Lower leg skin (tissue), 4 donors: ENCODE measurements at regions of chr16 and their contacts with region 1.

Region 1: DNA sequence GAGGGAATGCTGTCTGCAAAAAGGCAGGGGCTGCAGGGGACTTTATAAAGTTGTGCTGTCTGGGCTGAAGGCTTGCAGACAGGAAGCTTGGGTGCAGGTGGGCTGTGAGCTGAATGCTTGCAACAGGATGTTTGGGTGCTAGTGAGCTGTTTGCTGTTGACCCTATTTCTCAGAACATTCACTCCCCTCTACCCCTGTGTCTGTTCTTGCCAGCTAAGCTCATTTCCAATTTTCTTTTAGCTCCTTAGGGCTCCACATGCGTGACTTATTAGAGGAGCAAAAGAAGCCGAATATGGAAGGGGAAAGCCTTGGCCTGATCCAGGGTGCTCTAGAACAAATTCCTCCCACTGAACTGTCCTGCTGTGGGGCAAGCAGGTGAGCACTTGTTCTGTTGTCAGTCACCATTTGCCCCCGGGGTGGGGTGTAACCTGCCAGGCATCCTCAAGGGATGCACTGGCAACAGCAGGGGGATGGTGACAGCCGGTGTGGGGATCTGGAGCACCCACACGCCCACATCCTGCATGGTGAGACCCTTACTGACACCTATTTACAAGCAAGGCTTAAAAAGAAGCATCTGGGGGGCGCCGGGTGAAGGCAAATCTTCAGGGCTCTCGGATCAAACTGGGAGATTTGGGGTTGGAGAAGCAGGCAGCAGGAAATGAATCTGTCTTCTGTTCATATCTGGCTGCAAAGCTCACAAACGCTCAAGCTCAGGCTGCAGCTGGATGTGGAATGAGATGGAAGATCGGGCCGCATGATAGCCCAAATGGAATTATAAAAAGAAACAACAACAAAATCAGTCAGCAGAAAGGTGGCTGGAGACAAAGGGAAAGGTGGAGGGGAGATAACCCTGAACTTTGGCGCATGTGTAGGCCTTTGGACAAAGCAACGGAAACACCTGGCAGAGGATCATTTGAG is 21.1 kb upstream of the NUP93 start:
- DNase-seq: peak in 1 of 2 donors; percentile 76
- H3K4me3 ChIP-seq: no peak overlapping the region
- CTCF ChIP-seq: no peak
- POLR2A ChIP-seq: no peak

Region 2: DNA sequence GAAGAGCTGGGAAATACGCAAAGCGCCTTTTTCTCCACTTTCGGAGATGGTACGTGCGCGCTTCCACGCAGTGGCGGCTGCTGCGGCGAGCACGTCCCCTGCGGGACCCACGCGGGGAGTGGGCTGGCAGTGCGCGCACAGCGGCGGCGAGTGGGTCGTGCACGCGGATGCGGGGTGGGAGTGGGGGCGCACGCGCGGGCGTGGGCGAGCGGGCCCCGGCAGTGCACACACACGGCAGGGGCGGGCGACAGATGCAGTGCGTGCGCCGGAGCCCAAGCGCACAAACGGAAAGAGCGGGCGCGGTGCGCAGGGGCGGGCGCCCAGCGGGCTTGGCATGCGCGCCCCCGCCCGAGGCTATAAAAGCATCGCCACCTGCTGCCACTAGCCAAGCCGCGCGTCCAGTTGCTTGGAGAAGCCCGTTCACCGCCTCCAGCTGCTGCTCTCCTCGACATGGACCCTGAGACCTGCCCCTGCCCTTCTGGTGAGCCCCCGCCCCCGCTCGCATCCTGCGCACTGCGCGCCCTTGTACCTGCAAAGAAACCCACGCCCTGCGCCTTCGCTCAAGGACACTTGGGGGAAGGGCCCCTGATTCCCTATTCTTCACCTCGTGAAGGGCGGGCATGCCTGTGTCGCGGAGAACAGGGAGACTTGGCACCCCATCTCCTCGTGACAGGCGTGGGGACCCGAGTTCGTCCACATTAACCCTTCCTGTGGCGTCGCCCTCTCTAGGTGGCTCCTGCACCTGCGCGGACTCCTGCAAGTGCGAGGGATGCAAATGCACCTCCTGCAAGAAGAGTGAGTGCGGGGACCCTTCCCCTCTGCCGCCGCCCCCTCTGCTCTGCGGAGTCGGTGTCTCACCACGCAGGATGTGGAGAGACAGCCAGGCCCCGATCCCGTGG is 119.4 kb before region 1 on chr16 and contains the start of gene MT3:
- intact Hi-C with region 1: loop called (anchors 10 kb)
- DNase-seq: peak in 1 of 2 donors; percentile 78
- H3K4me3 ChIP-seq: no peak within 1 kb of the TSS
- CTCF ChIP-seq: no peak
- POLR2A ChIP-seq: no peak
- total RNA-seq, gene MT3: 1.2 TPM in 1 of 4 donors, not detected in the others

Region 3: DNA sequence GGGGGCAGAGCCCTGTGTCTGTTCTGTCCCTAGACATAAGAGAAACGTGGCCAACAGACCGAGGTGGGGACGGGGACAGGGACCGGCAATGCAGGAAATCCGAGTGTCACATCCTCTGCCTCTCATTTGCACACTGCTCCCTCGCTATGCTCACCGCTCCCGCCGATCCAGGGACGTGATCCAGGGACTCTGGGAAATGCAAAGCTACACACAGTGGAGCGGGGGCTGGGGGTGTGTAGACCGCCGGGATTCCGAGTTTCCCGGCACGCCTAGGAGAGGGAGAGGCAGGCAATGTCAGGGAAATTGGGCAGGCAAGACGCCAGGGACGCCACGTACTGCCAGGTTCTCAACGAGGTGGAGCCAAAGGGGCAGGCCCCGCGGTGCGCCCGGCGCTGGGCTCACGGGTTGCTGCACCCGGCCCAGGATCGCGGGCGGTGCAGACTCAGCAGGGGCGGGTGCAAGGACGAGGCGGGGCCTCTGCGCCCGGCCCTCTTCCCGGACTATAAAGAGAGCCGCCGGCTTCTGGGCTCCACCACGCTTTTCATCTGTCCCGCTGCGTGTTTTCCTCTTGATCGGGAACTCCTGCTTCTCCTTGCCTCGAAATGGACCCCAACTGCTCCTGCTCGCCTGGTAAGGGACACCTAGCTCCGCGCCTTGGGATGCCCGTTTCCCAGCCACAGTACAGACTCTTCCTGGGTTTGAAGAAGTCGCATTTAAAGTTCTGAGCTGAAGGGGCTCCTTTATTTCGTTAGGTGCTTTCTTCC is 26.7 kb before region 1 on chr16 and contains the start of gene MT1X:
- intact Hi-C with region 1: no loop called
- DNase-seq: peak; percentile 93 to 99
- H3K4me3 ChIP-seq: peak within 1 kb of the TSS; percentile 92
- CTCF ChIP-seq: no peak
- POLR2A ChIP-seq: peak in 1 of 2 donors; percentile 86
- total RNA-seq, gene MT1X: 1,041 to 3,584 (median 2,610) TPM